ENCODE measurements at regions of chr1 and their contacts with region 1.

Region 1: DNA sequence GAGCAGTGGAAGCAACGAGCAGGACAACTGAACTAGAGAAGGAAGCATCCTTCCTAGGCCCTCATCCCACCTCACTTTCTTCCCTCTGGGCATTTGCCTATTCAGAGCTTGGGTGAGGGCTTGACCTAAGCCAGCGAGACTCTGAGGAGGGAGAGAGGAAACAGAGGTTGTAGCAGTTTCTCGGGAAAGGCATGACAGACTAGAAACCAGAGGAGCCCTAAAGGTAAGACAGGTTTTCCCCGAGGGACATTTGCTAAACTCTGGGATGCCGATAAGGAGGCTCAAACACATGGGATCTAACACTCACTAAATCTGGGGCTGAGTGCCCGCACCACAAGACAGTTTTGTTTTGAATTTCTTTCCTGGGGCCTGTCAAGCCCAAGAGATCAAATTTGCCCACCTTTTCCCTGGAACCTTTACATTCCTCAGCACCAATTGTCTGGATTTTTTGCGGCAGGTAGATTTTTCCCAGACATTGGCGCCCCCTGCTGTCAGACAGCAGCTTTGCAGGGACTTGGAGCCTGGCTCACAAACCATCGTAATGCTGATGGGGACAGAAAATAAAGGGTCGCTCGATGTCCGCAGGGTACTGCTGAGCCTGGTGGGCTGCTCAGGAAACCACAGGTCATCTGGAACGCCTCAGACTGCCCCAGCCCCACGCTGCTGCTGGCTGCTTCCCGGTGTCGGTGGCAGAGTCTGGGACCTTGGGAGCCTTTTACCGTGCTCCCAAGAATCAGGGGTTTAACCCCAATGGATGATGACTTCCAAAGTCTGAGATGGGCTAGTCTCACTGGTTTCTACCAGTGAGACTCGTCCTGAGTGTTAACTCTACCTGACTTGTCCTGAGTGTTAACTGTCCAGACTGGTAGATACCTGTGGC is 23.4 kb upstream of the TSPAN2 start:
- DNase-seq: peak in 1 of 3 donors; percentile 38
- H3K4me3 ChIP-seq: no peak overlapping the region
- H3K27ac ChIP-seq: no peak overlapping the region
- H3K4me1 ChIP-seq: peaks cover 0 to 15% (median 4%) of the 10 kb centered on the region in 4 experiments
- H3K27me3 ChIP-seq: no peaks in the 10 kb centered on the region

Region 2: GRCh38 chr1:114979278-114979891 is 133.4 kb before region 1 on chr1:
- CTCF ChIA-PET with region 1: interaction called, 30 read pairs
- POLR2A ChIA-PET with region 1: no interaction called
- DNase-seq: peak; percentile 61 to 78 (median 69)
- H3K4me3 ChIP-seq: no peak overlapping the region
- H3K27ac ChIP-seq: no peak overlapping the region
- H3K4me1 ChIP-seq: no peaks in the 10 kb centered on the region
- H3K27me3 ChIP-seq: no peaks in the 10 kb centered on the region

Region 3: DNA sequence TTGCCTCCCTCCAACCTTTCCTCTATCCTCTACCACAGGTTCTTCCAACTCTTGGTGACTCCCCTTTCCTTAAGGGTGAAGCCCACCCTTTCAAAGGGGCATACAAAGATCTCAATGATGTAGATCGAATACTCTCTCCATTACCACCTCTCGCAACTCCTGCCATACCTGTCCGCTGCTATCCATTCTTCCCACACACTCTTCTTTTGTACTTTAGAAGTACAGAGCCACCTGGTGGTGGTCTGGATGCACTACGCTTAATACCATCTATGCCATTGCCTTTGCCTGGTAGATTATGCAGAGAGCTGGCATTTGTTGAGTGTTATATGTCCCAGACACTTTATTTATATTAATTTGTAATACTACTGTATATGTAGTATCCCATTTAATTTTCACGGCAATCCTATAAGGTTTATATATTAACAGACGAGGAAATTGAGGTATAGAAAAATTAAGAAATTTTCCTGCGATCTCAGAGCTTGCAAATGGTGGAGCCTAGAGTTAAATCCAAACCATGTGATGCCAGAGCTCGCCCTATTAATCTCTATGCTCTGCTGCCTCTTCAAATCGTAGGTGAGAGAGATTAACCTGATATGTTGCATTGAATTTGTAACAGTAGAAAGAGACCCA is 60.2 kb before region 1 on chr1:
- CTCF ChIA-PET with region 1: interaction called, 31 read pairs
- POLR2A ChIA-PET with region 1: interaction called, 3 read pairs
- DNase-seq: peak; percentile 38 to 70 (median 60)
- H3K4me3 ChIP-seq: no peak overlapping the region
- H3K27ac ChIP-seq: no peak overlapping the region
- H3K4me1 ChIP-seq: no peaks in the 10 kb centered on the region
- H3K27me3 ChIP-seq: no peaks in the 10 kb centered on the region

Region 4: GRCh38 chr1:115089420-115090185 is 23.1 kb before region 1 on chr1 and contains the start of gene TSPAN2:
- CTCF ChIA-PET with region 1: interaction called, 31 read pairs
- POLR2A ChIA-PET with region 1: no interaction called
- DNase-seq: peak; percentile 71 to 87 (median 80)
- H3K4me3 ChIP-seq: peak within 1 kb of the TSS; percentile 41 to 97 (median 78)
- H3K27ac ChIP-seq: peak within 1 kb of the TSS; percentile 53 to 75
- H3K4me1 ChIP-seq: peaks cover 34 to 68% (median 46%) of the 10 kb centered on the region in 4 experiments
- H3K27me3 ChIP-seq: no peaks in the 10 kb centered on the region

Region 5: GRCh38 chr1:115098979-115099692 is 13.6 kb before region 1 on chr1:
- CTCF ChIA-PET with region 1: interaction called, 24 read pairs
- POLR2A ChIA-PET with region 1: no interaction called
- DNase-seq: peak; percentile 96 to 99 (median 98)
- H3K4me3 ChIP-seq: peak overlapping the region in 6 of 7 experiments; percentile 63 to 94 (median 72)
- H3K27ac ChIP-seq: peak overlapping the region; percentile 98 to 100
- H3K4me1 ChIP-seq: peaks cover 20 to 44% (median 30%) of the 10 kb centered on the region in 4 experiments
- H3K27me3 ChIP-seq: no peaks in the 10 kb centered on the region

Region 6: DNA sequence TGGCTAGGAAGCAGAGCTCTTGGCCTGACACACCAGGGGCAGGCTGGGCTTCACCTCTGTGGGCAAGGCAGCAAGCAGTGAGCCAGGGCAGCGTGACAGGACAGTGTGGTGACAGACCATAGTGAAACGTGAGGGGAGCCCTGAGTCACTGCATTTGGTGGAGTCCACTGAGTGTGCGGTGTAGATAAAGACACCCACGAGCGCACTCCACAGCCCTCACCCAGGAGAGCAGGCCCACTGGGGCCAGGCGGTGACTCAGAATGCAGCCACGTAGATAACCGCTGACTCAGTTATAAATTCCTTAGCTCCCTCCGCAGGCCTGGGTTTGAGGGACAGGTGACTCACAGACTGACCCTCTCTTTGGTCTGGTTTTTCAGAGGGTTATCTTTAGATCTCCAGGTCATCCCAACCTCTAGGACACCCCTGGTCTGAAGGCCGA is 66.7 kb after region 1 on chr1:
- CTCF ChIA-PET with region 1: no interaction called
- POLR2A ChIA-PET with region 1: no interaction called
- DNase-seq: peak in 1 of 3 donors; percentile 4
- H3K4me3 ChIP-seq: no peak overlapping the region
- H3K27ac ChIP-seq: no peak overlapping the region
- H3K4me1 ChIP-seq: no peaks in the 10 kb centered on the region
- H3K27me3 ChIP-seq: peaks cover 0 to 2% (median 0%) of the 10 kb centered on the region in 5 experiments